Caco-2 (cell line): ENCODE measurements at regions of chr4 and their contacts with region 1.

Region 1: DNA sequence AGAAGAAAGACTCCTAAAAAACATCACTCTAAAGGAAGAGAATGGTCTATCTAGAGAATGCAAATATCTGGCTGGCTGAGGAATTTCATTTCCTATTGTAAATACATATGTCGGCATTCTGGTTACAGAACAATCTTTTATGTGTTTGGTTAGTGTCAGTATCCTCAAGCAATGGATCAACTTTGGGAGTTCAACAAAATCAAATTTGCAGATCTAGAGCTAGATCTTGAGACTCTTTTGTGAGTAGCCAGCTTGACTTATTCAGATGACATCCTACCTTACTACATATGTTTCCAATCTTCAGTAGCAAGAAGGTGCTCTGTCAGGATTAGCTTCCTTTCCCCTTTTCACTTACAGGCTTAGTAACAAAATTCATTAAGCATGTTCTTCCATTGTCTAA is 145.1 kb downstream of the BTC start:
- DNase-seq: no peak
- H3K4me3 ChIP-seq: no peak overlapping the region
- H3K4me3 Mint-ChIP-seq: no peak overlapping the region
- H3K27ac Mint-ChIP-seq: peak overlapping the region; percentile 22
- H3K4me1 ChIP-seq: peaks cover 54% of the 10 kb centered on the region
- H3K4me1 Mint-ChIP-seq: peaks cover 29% of the 10 kb centered on the region
- H3K27me3 ChIP-seq: no peaks in the 10 kb centered on the region
- H3K27me3 Mint-ChIP-seq: no peaks in the 10 kb centered on the region
- CTCF ChIP-seq: no peak

Region 2: DNA sequence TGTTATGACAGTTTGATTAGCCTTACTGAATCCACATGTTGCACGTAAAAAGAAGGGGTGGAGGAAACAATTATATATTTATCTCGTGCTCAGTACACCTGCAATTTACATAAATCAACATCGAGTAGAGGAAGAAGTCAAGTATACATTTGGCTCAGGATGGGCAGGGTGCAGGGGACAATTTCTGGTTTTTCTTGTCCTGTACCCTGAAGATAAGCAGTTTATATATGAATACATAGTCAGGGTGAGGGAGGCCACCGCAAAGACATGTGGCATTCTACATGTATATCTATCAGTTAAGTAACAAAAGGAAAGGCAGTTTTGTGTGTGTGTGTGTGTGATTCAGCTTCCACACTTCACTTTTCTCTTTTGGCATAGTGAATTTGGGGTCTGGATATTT is 295.4 kb before region 1 on chr4:
- CTCF ChIA-PET with region 1: no interaction called
- POLR2A ChIA-PET with region 1: no interaction called
- intact Hi-C with region 1: no loop called
- DNase-seq: no peak
- H3K4me3 ChIP-seq: no peak overlapping the region
- H3K4me3 Mint-ChIP-seq: no peak overlapping the region
- H3K27ac Mint-ChIP-seq: no peak overlapping the region
- H3K4me1 ChIP-seq: no peaks in the 10 kb centered on the region
- H3K4me1 Mint-ChIP-seq: no peaks in the 10 kb centered on the region
- H3K27me3 ChIP-seq: no peaks in the 10 kb centered on the region
- H3K27me3 Mint-ChIP-seq: no peaks in the 10 kb centered on the region
- CTCF ChIP-seq: no peak

Region 3: DNA sequence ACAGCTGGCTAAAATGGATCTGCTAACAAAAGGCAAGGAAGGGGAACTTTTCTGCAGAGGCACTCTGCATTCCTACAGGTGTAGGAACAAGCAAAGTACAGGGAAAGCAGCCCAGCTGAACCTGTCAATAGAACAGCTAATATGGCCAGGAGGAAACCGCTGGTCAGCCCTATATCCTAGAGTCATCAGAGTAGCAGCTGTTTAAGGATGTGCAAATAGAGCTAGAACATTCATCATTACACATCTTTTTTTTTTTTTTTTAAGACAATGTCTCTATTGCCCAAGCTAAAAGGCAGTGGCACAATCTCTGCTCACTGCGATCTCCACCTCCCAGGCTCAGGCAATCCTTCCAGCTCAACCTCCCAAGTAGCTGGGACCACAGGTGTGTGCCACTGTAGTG is 17.9 kb before region 1 on chr4:
- CTCF ChIA-PET with region 1: no interaction called
- POLR2A ChIA-PET with region 1: interaction called, 3 read pairs
- intact Hi-C with region 1: loop called (anchors 1 kb)
- DNase-seq: peak; percentile 37 to 41
- H3K4me3 ChIP-seq: no peak overlapping the region
- H3K4me3 Mint-ChIP-seq: peak overlapping the region; percentile 2
- H3K27ac Mint-ChIP-seq: peak overlapping the region; percentile 39
- H3K4me1 ChIP-seq: peaks cover 72% of the 10 kb centered on the region
- H3K4me1 Mint-ChIP-seq: peaks cover 39% of the 10 kb centered on the region
- H3K27me3 ChIP-seq: no peaks in the 10 kb centered on the region
- H3K27me3 Mint-ChIP-seq: no peaks in the 10 kb centered on the region
- CTCF ChIP-seq: no peak